ENCODE measurements at regions of chr5 and their contacts with region 1.

Region 1: GRCh38 chr5:179697993-179698934 is 503 bp upstream of the CANX start:
- DNase-seq: peak; percentile 96 to 100 (median 99)
- H3K4me3 ChIP-seq: peak overlapping the region; percentile 70 to 100 (median 96)
- H3K27ac ChIP-seq: peak overlapping the region; percentile 72 to 99 (median 95)
- H3K27me3 ChIP-seq: no peaks in the 10 kb centered on the region
- CTCF ChIP-seq: peak in 30 of 56 donors; percentile 8 to 53 (median 28)

Region 2: GRCh38 chr5:178146020-178146820 is 1552.0 kb before region 1 on chr5:
- intact Hi-C with region 1: no loop called
- DNase-seq: peak in 6 of 10 donors; percentile 45 to 68 (median 61)
- H3K4me3 ChIP-seq: no peak overlapping the region
- H3K27ac ChIP-seq: no peak overlapping the region
- H3K27me3 ChIP-seq: no peaks in the 10 kb centered on the region
- CTCF ChIP-seq: peak in 55 of 56 donors; percentile 28 to 74 (median 58)

Region 3: GRCh38 chr5:179678223-179679013 is 19.8 kb before region 1 on chr5:
- intact Hi-C with region 1: loop called (anchors 1 to 2 kb)
- DNase-seq: peak; percentile 92 to 96 (median 94)
- H3K4me3 ChIP-seq: peak overlapping the region; percentile 70 to 100 (median 92)
- H3K27ac ChIP-seq: peak overlapping the region; percentile 60 to 98 (median 91)
- H3K27me3 ChIP-seq: no peaks in the 10 kb centered on the region
- CTCF ChIP-seq: peak in 35 of 56 donors; percentile 9 to 57 (median 32)

Region 4: DNA sequence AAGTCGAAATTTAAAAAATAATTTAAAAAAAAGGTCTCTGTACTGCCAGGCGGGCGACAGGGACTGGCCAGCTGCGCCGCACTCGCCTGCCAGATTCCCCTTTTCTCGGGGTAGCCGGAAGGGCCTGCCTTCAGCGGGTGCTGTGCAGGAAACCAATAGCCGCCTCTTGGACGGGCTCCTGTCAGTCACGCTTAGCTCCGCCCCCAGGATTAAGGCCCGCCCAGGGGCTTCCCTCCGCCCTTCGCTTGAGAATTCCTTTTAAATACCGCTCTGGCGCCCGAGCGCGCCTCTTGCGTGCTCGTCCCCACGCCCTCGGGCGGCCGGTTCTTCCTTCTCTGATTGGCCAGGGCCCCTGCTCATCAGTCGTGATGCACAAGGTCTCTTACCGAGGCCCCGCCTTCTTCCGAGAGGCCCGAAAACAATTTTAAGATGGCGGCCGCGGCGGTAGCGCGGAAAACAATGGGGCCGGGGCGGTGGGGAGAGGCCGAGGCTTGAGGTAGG is 34.2 kb after region 1 on chr5 and contains the start of gene MAML1:
- intact Hi-C with region 1: loop called (anchors 1 kb)
- DNase-seq: peak; percentile 100
- H3K4me3 ChIP-seq: peak within 1 kb of the TSS; percentile 54 to 97 (median 81)
- H3K27ac ChIP-seq: peak within 1 kb of the TSS; percentile 60 to 99 (median 93)
- H3K27me3 ChIP-seq: no peaks in the 10 kb centered on the region
- CTCF ChIP-seq: peak in 27 of 56 donors; percentile 0 to 53 (median 29)
- total RNA-seq, gene MAML1: 17.4 to 42.6 (median 27.4) TPM